Head of caudate nucleus (tissue), 42 donors: ENCODE measurements at regions of chr9 and their contacts with region 1.

Region 1: GRCh38 chr9:79571309-79572031 is at the start of gene TLE4:
- DNase-seq: peak; percentile 100

Region 2: GRCh38 chr9:79408617-79409016 is 162.9 kb before region 1 on chr9:
- intact Hi-C with region 1: no loop called
- DNase-seq: no peak

Region 3: DNA sequence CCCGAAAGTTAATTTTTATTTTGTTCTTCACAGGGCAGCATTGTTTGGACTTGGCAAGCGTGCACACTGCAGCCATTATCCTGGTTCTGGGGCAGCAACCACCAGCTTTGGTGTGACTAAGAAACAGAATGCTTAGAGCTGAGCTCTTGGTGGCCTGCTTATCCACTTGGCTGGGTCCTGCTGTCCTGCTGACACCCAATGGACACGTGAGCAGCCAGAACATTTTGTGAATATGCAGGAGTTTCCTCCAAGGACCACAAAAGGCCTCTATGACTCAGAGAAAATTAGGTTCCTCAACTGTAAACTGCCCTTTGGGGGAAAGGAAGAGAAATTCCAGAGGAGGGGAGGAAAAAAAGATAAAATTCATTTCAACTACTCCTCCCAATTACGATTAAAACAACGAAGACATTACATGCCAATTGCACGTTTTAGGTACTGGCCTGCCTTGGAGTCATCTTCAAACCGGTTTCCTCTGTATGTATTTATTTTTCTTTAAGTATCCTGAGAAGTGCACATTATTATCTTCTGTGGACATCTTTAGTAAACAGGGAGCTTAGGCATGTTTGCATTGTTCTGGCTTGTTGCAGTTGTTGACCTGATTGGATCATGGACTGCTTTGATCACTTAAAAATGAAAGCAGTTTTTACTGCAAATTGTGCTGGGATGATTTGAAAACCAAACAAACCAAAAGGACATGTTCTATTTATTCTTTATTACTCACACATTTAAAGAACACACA is 82.1 kb before region 1 on chr9:
- intact Hi-C with region 1: loop called (anchors 5 kb)
- DNase-seq: peak; percentile 37 to 91 (median 75)

Region 4: DNA sequence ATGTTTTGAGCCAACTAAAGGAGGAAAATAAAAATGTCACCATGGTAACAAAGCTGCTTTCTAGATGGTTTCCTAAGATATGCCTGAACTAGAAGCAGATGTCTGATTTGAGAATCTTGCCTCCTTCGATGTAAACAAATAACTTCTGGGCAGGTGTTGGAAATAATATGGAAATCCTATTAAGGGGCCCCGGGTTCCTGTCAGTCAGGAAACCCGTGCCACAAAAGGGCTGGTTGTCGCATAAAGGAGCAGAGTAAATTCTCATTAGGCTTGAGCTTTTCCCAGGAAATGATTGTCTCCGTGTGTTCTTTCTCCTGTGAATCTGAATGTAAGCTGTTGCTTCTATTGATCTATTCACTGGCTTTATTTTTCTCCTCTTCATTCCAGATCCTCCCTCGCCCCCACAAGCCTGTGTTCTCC is 91.1 kb after region 1 on chr9:
- intact Hi-C with region 1: loop called (anchors 10 kb)
- DNase-seq: no peak

Region 5: GRCh38 chr9:79701651-79702050 is 130.2 kb after region 1 on chr9:
- intact Hi-C with region 1: no loop called
- DNase-seq: peak in 2 of 42 donors; percentile 30 to 38

Region 6: DNA sequence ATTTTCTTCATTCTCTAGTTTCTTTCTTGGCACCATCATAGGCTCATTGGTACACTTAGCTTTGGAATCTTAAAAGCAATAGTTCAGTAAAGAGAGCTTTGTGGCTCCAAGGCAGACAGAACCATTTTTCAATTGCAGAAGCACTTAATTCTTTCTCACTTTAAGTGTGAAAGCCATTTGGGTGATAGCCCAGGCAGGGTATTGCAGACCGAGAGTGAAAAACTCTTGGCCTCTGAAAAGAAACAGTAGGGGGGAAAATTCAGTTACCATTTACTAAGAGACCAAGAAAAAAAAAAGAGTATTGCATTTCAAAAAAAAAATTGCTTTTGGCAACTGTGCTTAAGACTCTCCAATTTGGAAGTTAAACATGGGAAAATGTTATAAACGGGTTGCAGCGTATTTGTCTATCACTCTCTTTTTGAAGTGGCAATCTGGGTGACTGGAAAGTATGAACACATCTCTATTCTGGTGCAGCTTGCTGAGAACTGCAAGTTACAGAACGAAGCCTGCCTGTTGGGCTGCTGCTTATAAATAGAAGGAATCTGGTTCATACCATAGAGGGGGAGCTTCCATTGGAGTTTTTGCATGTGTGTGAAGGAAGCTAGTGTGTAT is 170.7 kb after region 1 on chr9:
- intact Hi-C with region 1: no loop called
- DNase-seq: peak in 4 of 42 donors; percentile 24 to 58 (median 28)

Region 7: GRCh38 chr9:79939819-79940218 is 368.3 kb after region 1 on chr9:
- intact Hi-C with region 1: loop called (anchors 10 kb)
- DNase-seq: peak in 1 of 42 donors; percentile 42